HEK293 (cell line): ENCODE measurements at regions of chr12 and their contacts with region 1.

Region 1: DNA sequence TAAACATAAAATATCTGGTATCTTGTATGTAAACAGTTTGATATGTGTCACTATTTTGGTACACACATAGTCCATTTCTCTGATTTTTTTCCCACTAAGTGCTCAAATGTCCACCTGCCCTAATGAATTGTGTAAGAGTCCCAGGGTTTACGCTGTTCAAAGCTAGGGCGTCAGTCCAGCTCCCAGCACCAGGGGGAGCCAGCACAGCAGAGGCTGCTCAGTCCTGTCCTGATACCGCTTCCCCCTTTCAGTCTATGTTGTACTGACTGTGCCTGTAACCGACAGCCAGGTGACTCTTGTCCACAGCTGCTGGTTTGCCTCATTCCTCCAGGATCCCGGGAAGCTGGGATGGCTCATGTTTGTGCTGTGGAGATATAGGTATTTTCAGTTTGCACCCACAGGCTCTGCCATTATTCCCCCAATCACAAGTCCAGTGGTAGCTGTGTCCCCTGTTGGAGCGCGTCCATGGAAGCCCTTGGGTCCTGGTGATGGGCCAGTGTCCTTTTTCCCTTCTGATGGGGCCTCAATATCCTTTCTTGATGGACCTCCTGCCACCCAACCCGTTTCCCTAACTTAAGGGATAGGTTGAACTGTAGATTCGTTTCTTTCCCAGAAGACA is 242.0 kb downstream of the NEDD1 start:
- H3K4me3 ChIP-seq: no peak overlapping the region
- H3K27ac ChIP-seq: no peak overlapping the region
- H3K4me1 ChIP-seq: no peaks in the 10 kb centered on the region
- CTCF ChIP-seq: peak; percentile 31

Region 2: DNA sequence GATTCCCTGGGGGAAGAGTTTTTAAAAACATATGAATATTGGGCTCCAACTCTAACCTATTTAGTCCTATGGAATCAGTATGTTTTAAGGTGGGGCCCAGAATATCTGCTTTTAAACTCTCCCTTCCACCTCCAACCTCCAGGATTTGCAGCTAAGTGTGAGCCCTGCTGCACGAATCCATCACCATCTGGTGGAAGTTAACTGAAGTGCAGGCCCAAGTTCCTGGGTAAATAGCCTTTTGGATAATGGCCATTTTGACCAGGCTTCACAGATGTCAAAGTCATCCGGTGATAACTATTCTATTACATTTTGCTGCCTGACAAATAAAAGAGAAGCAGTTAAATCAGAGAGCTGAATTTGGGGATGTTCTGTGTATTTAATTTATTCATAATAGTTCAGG is 255.5 kb after region 1 on chr12:
- CTCF ChIA-PET with region 1: interaction called, 15 read pairs
- POLR2A ChIA-PET with region 1: no interaction called
- H3K4me3 ChIP-seq: no peak overlapping the region
- H3K27ac ChIP-seq: no peak overlapping the region
- H3K4me1 ChIP-seq: no peaks in the 10 kb centered on the region
- CTCF ChIP-seq: no peak